PC-9 (cell line): ENCODE measurements at regions of chr12 and their contacts with region 1.

Region 1: DNA sequence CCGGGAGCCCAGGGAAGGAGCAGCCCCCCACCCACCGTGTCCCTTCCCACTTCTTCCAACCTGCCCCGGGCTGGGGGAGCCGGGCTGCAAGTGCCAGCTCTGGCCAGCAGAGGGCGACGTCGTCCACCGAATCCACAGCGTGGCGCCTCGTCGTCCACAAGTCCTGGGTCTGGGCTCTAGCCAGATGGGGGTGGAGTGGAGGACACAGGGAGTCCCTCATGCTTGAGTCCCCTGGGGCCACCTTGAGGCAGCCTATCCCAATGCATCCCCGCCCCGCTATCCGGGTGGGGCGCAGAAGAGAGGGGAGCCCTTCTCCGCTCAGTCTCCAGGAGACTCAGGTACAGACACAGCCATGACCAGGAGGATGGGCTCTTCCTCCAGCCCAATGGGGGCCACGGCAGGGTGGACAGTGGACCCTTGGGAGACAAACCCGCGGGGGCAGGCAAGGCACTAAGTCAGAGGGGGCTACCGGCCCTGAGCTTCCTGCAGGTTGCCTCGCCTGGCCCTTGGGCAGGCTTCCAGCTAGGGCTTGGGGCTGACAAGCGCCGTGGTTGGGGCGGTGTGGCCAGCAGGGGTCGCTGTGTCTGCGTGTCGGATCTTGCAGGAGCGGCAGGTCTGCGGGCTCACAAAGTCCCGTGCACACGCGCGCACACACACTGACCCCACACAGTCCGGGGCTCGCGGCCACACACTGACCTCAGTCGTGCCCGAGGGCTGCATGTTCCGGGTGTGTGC is 5.5 kb downstream of the AQP5 start:
- DNase-seq: peak; percentile 77 to 83
- H3K4me3 ChIP-seq: peak overlapping the region; percentile 50
- H3K27ac ChIP-seq: no peak overlapping the region
- H3K4me1 ChIP-seq: peaks cover 33% of the 10 kb centered on the region
- H3K27me3 ChIP-seq: peaks cover 23% of the 10 kb centered on the region
- CTCF ChIP-seq: peak; percentile 87

Region 2: DNA sequence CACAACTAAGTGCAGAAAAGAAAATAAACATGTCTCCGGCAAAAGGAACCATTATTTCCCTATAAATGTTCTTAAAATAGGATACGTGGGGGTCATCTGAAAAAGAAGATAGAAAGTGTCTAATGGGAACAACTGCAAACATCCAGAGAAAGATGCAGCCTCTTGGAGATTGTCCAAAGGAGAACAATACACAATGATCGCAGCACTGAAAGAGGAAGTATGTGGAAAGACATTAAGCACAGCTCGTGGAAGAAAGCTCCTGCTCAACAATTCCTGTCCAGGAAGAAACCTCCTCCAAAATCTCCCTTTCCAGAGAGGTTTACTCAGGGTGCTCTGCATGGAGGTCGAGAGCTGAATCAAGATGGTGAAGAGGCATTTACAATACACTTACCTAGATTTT is 1394.9 kb before region 1 on chr12:
- CTCF ChIA-PET with region 1: no interaction called
- POLR2A ChIA-PET with region 1: no interaction called
- intact Hi-C with region 1: no loop called
- DNase-seq: no peak
- H3K4me3 ChIP-seq: no peak overlapping the region
- H3K27ac ChIP-seq: no peak overlapping the region
- H3K4me1 ChIP-seq: no peaks in the 10 kb centered on the region
- H3K27me3 ChIP-seq: peaks cover 50% of the 10 kb centered on the region
- CTCF ChIP-seq: no peak

Region 3: DNA sequence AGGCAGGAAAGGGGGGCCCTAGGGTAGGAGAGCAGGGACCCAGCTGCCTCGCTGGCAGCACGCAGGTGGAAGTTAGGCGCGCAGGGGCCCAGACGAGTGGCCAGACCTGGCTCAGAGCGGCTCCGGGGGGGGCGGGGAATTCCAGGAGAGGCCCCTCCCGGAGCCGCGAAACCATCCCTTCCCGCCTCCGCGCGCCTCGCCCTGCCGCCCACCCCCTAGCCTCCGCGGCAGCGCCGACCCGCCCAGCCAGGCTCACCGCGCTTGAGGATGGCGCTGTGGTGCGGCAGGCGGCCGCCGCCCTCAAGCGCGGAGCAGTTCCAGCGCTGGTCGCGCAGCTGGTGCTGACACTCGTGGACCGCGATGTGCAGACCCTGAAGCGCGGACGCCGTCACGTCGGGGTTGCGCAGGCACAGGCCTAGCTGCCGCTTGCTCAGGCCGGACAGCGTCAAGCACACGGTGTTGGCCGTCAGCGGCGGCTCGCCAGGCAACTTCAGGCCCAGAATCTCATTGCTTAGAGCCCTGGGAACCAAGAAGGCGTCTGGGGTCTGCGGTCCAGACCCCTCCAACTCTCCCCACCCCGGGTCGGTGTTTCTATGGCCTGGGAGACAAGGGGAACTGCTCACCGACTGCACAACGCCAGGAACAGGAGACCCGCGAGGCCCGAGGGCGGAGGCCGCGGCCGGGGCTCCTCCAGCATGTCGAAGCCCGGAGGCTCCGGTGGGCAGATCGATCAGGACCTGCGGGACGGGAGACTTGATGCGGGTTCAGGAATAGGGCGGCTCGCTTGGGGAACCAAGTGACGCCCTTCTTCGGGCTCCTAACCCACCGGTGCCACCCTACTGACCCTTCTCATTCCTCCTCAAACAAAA is 997.1 kb before region 1 on chr12:
- CTCF ChIA-PET with region 1: interaction called, 16 read pairs
- POLR2A ChIA-PET with region 1: no interaction called
- intact Hi-C with region 1: no loop called
- DNase-seq: no peak
- H3K4me3 ChIP-seq: no peak overlapping the region
- H3K27ac ChIP-seq: no peak overlapping the region
- H3K4me1 ChIP-seq: peaks cover 8% of the 10 kb centered on the region; the same call in 1 of the 2 replicates
- H3K27me3 ChIP-seq: peaks cover 17% of the 10 kb centered on the region; the same call in 1 of the 2 replicates
- CTCF ChIP-seq: no peak

Region 4: GRCh38 chr12:49236423-49236822 is 730.8 kb before region 1 on chr12:
- CTCF ChIA-PET with region 1: no interaction called
- POLR2A ChIA-PET with region 1: no interaction called
- intact Hi-C with region 1: no loop called
- DNase-seq: no peak
- H3K4me3 ChIP-seq: no peak overlapping the region
- H3K27ac ChIP-seq: no peak overlapping the region
- H3K4me1 ChIP-seq: 0 out of 2 replicates have a peak, but pooled peaks cover 3% of the 10 kb centered on the region
- H3K27me3 ChIP-seq: no peaks in the 10 kb centered on the region
- CTCF ChIP-seq: no peak

Region 5: GRCh38 chr12:49673446-49674317 is 293.5 kb before region 1 on chr12:
- CTCF ChIA-PET with region 1: interaction called, 11 read pairs
- POLR2A ChIA-PET with region 1: no interaction called
- intact Hi-C with region 1: no loop called
- DNase-seq: peak in 1 of 2 experiments; percentile 53
- H3K4me3 ChIP-seq: no peak overlapping the region
- H3K27ac ChIP-seq: no peak overlapping the region
- H3K4me1 ChIP-seq: no peaks in the 10 kb centered on the region
- H3K27me3 ChIP-seq: no peaks in the 10 kb centered on the region; the same call in 1 of the 2 replicates
- CTCF ChIP-seq: no peak

Region 6: GRCh38 chr12:49842519-49843352 is 124.5 kb before region 1 on chr12 and contains the start of gene BCDIN3D:
- CTCF ChIA-PET with region 1: interaction called, 17 read pairs
- POLR2A ChIA-PET with region 1: no interaction called
- intact Hi-C with region 1: no loop called
- DNase-seq: peak; percentile 89 to 92
- H3K4me3 ChIP-seq: peak within 1 kb of the TSS; percentile 69
- H3K27ac ChIP-seq: peak within 1 kb of the TSS; percentile 77
- H3K4me1 ChIP-seq: peaks cover 21% of the 10 kb centered on the region
- H3K27me3 ChIP-seq: no peaks in the 10 kb centered on the region
- CTCF ChIP-seq: no peak
- total RNA-seq, gene BCDIN3D: 2.5 and 4.7 TPM in 2 replicates

Region 7: GRCh38 chr12:49945394-49946080 is 21.7 kb before region 1 on chr12:
- CTCF ChIA-PET with region 1: interaction called, 12 read pairs
- POLR2A ChIA-PET with region 1: no interaction called
- intact Hi-C with region 1: loop called (anchors 2 kb)
- DNase-seq: peak; percentile 62 to 78
- H3K4me3 ChIP-seq: no peak overlapping the region
- H3K27ac ChIP-seq: no peak overlapping the region
- H3K4me1 ChIP-seq: peaks cover 29% of the 10 kb centered on the region
- H3K27me3 ChIP-seq: no peaks in the 10 kb centered on the region
- CTCF ChIP-seq: peak; percentile 82

Region 8: GRCh38 chr12:50041062-50041860 is 74.1 kb after region 1 on chr12:
- CTCF ChIA-PET with region 1: no interaction called
- POLR2A ChIA-PET with region 1: no interaction called
- intact Hi-C with region 1: no loop called
- DNase-seq: no peak
- H3K4me3 ChIP-seq: no peak overlapping the region
- H3K27ac ChIP-seq: no peak overlapping the region
- H3K4me1 ChIP-seq: no peaks in the 10 kb centered on the region
- H3K27me3 ChIP-seq: no peaks in the 10 kb centered on the region
- CTCF ChIP-seq: no peak

Region 9: GRCh38 chr12:50084775-50085614 is 117.8 kb after region 1 on chr12 and contains the start of gene SMARCD1:
- CTCF ChIA-PET with region 1: interaction called, 3 read pairs
- POLR2A ChIA-PET with region 1: interaction called, 11 read pairs
- intact Hi-C with region 1: no loop called
- DNase-seq: peak; percentile 78 to 82
- H3K4me3 ChIP-seq: peak within 1 kb of the TSS; percentile 99
- H3K27ac ChIP-seq: peak within 1 kb of the TSS; percentile 69
- H3K4me1 ChIP-seq: peaks cover 32% of the 10 kb centered on the region
- H3K27me3 ChIP-seq: no peaks in the 10 kb centered on the region
- CTCF ChIP-seq: peak; percentile 51; the same call in 1 of the 2 replicates
- total RNA-seq, gene SMARCD1: 48.8 and 66.7 TPM in 2 replicates

Region 10: GRCh38 chr12:50167041-50167828 is 200.0 kb after region 1 on chr12 and contains the start of gene CERS5:
- CTCF ChIA-PET with region 1: no interaction called
- POLR2A ChIA-PET with region 1: no interaction called
- intact Hi-C with region 1: loop called (anchors 10 kb)
- DNase-seq: peak; percentile 92 to 99
- H3K4me3 ChIP-seq: peak within 1 kb of the TSS; percentile 100
- H3K27ac ChIP-seq: peak within 1 kb of the TSS; percentile 35
- H3K4me1 ChIP-seq: peaks cover 17% of the 10 kb centered on the region; the same call in 1 of the 2 replicates
- H3K27me3 ChIP-seq: no peaks in the 10 kb centered on the region
- CTCF ChIP-seq: peak; percentile 50; the same call in 1 of the 2 replicates
- total RNA-seq, gene CERS5: 33.0 and 41.7 TPM in 2 replicates

Region 11: GRCh38 chr12:50533203-50533584 is 566.0 kb after region 1 on chr12:
- CTCF ChIA-PET with region 1: no interaction called
- POLR2A ChIA-PET with region 1: no interaction called
- intact Hi-C with region 1: no loop called
- DNase-seq: no peak
- H3K4me3 ChIP-seq: peak overlapping the region; percentile 30; the same call in 1 of the 2 replicates
- H3K27ac ChIP-seq: peak overlapping the region; percentile 98
- H3K4me1 ChIP-seq: peaks cover 85% of the 10 kb centered on the region
- H3K27me3 ChIP-seq: no peaks in the 10 kb centered on the region
- CTCF ChIP-seq: no peak